Heart right ventricle (tissue), 16 donors: ENCODE measurements at regions of chr9 and their contacts with region 1.

Region 1: GRCh38 chr9:69857131-69857530 is 36.5 kb downstream of the CFAP95 start:
- DNase-seq: no peak
- ATAC-seq: no peak
- H3K4me3 ChIP-seq: no peak overlapping the region
- H3K27ac ChIP-seq: no peak overlapping the region
- H3K4me1 ChIP-seq: no peaks in the 10 kb centered on the region
- H3K27me3 ChIP-seq: peaks cover 0 to 7% (median 0%) of the 10 kb centered on the region in 7 donors
- CTCF ChIP-seq: no peak

Region 2: GRCh38 chr9:69798744-69799143 is 58.4 kb before region 1 on chr9:
- intact Hi-C with region 1: loop called in 1 of 10 experiments (anchors 10 kb)
- DNase-seq: no peak
- ATAC-seq: no peak
- H3K4me3 ChIP-seq: no peak overlapping the region
- H3K27ac ChIP-seq: no peak overlapping the region
- H3K4me1 ChIP-seq: no peaks in the 10 kb centered on the region
- H3K27me3 ChIP-seq: no peaks in the 10 kb centered on the region
- CTCF ChIP-seq: no peak